ENCODE measurements at regions of chr1 and their contacts with region 1.

Region 1: GRCh38 chr1:25616095-25616986 is at the start of gene MAN1C1:
- DNase-seq: peak; percentile 86 to 92 (median 90)
- H3K4me3 ChIP-seq: peak within 1 kb of the TSS; percentile 65
- H3K27ac ChIP-seq: peak within 1 kb of the TSS; percentile 60 to 81
- H3K4me1 ChIP-seq: peaks cover 11% of the 10 kb centered on the region
- H3K27me3 ChIP-seq: no peaks in the 10 kb centered on the region
- CTCF ChIP-seq: peak in 2 of 3 donors; percentile 51 to 67
- EP300 ChIP-seq: no peak
- POLR2A ChIP-seq: peak; percentile 30
- total RNA-seq, gene MAN1C1: 18.0 to 59.2 (median 41.0) TPM

Region 2: GRCh38 chr1:25695090-25695770 is 78.9 kb after region 1 on chr1:
- intact Hi-C with region 1: loop called in 2 of 4 experiments (anchors 2 to 10 kb)
- DNase-seq: peak; percentile 73 to 88 (median 80)
- H3K4me3 ChIP-seq: no peak overlapping the region
- H3K27ac ChIP-seq: peak overlapping the region; percentile 60 to 72
- H3K4me1 ChIP-seq: peaks cover 37% of the 10 kb centered on the region
- H3K27me3 ChIP-seq: no peaks in the 10 kb centered on the region
- CTCF ChIP-seq: peak in 1 of 3 donors; percentile 44
- EP300 ChIP-seq: peak; percentile 92
- POLR2A ChIP-seq: no peak

Region 3: DNA sequence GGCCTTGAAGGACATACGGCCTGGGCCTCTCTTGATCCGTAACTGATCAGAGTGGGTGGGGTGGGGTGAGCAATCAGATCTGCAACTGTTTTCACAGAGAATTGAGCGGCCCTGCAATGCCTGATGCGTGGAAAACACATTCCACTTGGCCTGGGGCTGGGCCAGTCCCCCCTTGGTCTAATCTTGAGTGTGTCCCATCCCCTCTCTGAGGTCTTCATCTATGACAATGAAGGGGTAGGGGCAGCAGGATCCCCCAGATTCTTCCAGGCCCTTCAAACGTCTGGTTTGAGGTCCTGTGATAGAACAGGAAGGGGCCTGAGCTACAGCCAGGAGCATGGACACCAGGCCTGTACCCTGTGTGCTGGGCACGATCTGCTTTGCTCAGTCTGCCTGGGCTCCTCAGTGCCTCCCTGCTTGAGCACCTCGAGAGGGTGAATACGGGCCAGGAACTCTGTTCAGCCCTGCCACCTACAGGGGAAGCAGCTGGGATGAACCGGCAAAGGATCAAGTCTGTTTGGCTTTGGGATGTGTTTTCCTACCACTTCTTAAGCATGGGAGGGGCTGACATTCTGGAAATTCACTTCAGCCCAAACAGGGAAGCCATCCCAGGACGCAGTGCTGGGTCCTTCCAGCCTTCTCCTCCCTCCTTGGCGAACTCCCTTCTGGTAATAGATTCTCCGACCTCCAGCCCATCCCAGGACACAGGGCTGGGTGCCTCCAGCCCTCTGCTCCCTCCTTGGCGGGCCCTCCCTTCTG is 127.7 kb after region 1 on chr1:
- intact Hi-C with region 1: loop called in 1 of 4 experiments (anchors 2 kb)
- DNase-seq: peak; percentile 78 to 83 (median 81)
- H3K4me3 ChIP-seq: no peak overlapping the region
- H3K27ac ChIP-seq: peak overlapping the region; percentile 26 to 83
- H3K4me1 ChIP-seq: peaks cover 16% of the 10 kb centered on the region
- H3K27me3 ChIP-seq: no peaks in the 10 kb centered on the region
- CTCF ChIP-seq: peak; percentile 21 to 65 (median 61)
- EP300 ChIP-seq: no peak
- POLR2A ChIP-seq: peak; percentile 13

Region 4: GRCh38 chr1:25810341-25811299 is 194.3 kb after region 1 on chr1:
- intact Hi-C with region 1: loop called in 1 of 4 experiments (anchors 5 kb)
- DNase-seq: peak; percentile 66 to 84 (median 80)
- H3K4me3 ChIP-seq: no peak overlapping the region
- H3K27ac ChIP-seq: no peak overlapping the region
- H3K4me1 ChIP-seq: no peaks in the 10 kb centered on the region
- H3K27me3 ChIP-seq: no peaks in the 10 kb centered on the region
- CTCF ChIP-seq: peak; percentile 89 to 95 (median 93)
- EP300 ChIP-seq: no peak
- POLR2A ChIP-seq: no peak

Measured in ovary (tissue), 10 donors.